Activated B cell treated with CpG ODN at 0.5 μM for 24 hours (primary cell): ENCODE measurements at regions of chr12 and their contacts with region 1.

Region 1: GRCh38 chr12:105107494-105108371 is at the start of gene WASHC4:
- DNase-seq: peak; percentile 95
- ATAC-seq: peak; percentile 89
- H3K4me3 Mint-ChIP-seq: peak within 1 kb of the TSS; percentile 96
- H3K27ac Mint-ChIP-seq: peak within 1 kb of the TSS; percentile 96
- H3K4me1 Mint-ChIP-seq: peaks cover 33% of the 10 kb centered on the region
- H3K27me3 Mint-ChIP-seq: no peaks in the 10 kb centered on the region
- CTCF ChIP-seq: no peak
- total RNA-seq, gene WASHC4: 105 and 128 TPM in 2 replicates

Region 2: GRCh38 chr12:104137913-104138796 is 969.6 kb before region 1 on chr12 and contains the start of gene NFYB:
- CTCF ChIA-PET with region 1: no interaction called
- POLR2A ChIA-PET with region 1: interaction called, 19 read pairs
- intact Hi-C with region 1: loop called (anchors 1 kb)
- DNase-seq: peak; percentile 90
- ATAC-seq: peak; percentile 94
- H3K4me3 Mint-ChIP-seq: peak within 1 kb of the TSS; percentile 89
- H3K27ac Mint-ChIP-seq: peak within 1 kb of the TSS; percentile 85
- H3K4me1 Mint-ChIP-seq: peaks cover 21% of the 10 kb centered on the region
- H3K27me3 Mint-ChIP-seq: no peaks in the 10 kb centered on the region
- CTCF ChIP-seq: no peak
- total RNA-seq, gene NFYB: 17.0 and 17.1 TPM in 2 replicates

Region 3: GRCh38 chr12:104303538-104304151 is 804.1 kb before region 1 on chr12 and contains the start of gene EID3:
- CTCF ChIA-PET with region 1: no interaction called
- POLR2A ChIA-PET with region 1: interaction called, 3 read pairs
- intact Hi-C with region 1: loop called (anchors 5 kb)
- DNase-seq: peak; percentile 88
- ATAC-seq: peak; percentile 99
- H3K4me3 Mint-ChIP-seq: peak within 1 kb of the TSS; percentile 94
- H3K27ac Mint-ChIP-seq: peak within 1 kb of the TSS; percentile 93
- H3K4me1 Mint-ChIP-seq: peaks cover 37% of the 10 kb centered on the region
- H3K27me3 Mint-ChIP-seq: no peaks in the 10 kb centered on the region
- CTCF ChIP-seq: no peak
- total RNA-seq, gene EID3: 6.2 TPM in 2 replicates

Region 4: GRCh38 chr12:104986022-104986941 is 121.5 kb before region 1 on chr12 and contains the start of gene NOPCHAP1:
- CTCF ChIA-PET with region 1: no interaction called
- POLR2A ChIA-PET with region 1: no interaction called
- intact Hi-C with region 1: loop called (anchors 5 kb)
- DNase-seq: peak; percentile 83
- ATAC-seq: peak; percentile 98
- H3K4me3 Mint-ChIP-seq: peak within 1 kb of the TSS; percentile 91
- H3K27ac Mint-ChIP-seq: peak within 1 kb of the TSS; percentile 70
- H3K4me1 Mint-ChIP-seq: peaks cover 24% of the 10 kb centered on the region
- H3K27me3 Mint-ChIP-seq: no peaks in the 10 kb centered on the region
- CTCF ChIP-seq: no peak
- total RNA-seq, gene NOPCHAP1: 26.4 and 30.0 TPM in 2 replicates

Region 5: DNA sequence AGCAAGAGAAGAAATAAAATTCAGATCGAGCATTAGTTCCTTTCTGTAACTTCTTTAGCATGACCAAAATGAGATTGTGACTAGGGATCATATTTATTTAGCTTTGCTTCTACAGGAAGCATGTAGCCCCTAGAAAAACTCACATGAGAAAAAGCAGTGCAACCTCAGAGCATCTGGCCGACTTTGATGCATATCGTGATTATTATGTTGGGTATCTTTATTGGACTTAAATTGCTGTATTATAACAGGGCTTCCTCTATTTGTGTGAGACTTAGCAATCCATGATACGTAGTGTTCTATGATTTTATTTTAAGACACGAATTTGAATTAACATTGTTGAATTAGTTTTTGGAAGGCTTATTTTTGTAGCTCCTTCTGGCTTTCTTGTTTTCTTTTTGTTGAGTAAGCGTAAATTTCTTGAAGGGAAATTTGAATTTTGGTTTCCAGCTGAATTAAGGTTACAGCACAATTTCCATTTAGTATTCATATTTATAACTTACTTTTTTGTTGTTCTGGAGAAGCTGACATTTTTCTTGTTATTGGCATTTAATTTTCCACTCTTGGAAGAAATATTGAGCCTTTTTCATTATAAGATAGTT is 33.7 kb after region 1 on chr12:
- CTCF ChIA-PET with region 1: no interaction called
- POLR2A ChIA-PET with region 1: no interaction called
- intact Hi-C with region 1: loop called (anchors 5 kb)
- DNase-seq: no peak
- ATAC-seq: no peak
- H3K4me3 Mint-ChIP-seq: no peak overlapping the region
- H3K27ac Mint-ChIP-seq: no peak overlapping the region
- H3K4me1 Mint-ChIP-seq: peaks cover 9% of the 10 kb centered on the region
- H3K27me3 Mint-ChIP-seq: no peaks in the 10 kb centered on the region
- CTCF ChIP-seq: no peak

Region 6: GRCh38 chr12:105189293-105189692 is 81.6 kb after region 1 on chr12:
- CTCF ChIA-PET with region 1: no interaction called
- POLR2A ChIA-PET with region 1: no interaction called
- intact Hi-C with region 1: no loop called
- DNase-seq: no peak
- ATAC-seq: no peak
- H3K4me3 Mint-ChIP-seq: no peak overlapping the region
- H3K27ac Mint-ChIP-seq: peak overlapping the region; percentile 11
- H3K4me1 Mint-ChIP-seq: peaks cover 2% of the 10 kb centered on the region
- H3K27me3 Mint-ChIP-seq: no peaks in the 10 kb centered on the region
- CTCF ChIP-seq: no peak

Region 7: GRCh38 chr12:106955377-106956047 is 1847.8 kb after region 1 on chr12 and contains the start of gene TMEM263:
- CTCF ChIA-PET with region 1: no interaction called
- POLR2A ChIA-PET with region 1: no interaction called
- intact Hi-C with region 1: loop called (anchors 5 kb)
- DNase-seq: peak; percentile 91
- ATAC-seq: peak; percentile 86
- H3K4me3 Mint-ChIP-seq: peak within 1 kb of the TSS; percentile 96
- H3K27ac Mint-ChIP-seq: peak within 1 kb of the TSS; percentile 84
- H3K4me1 Mint-ChIP-seq: peaks cover 23% of the 10 kb centered on the region
- H3K27me3 Mint-ChIP-seq: no peaks in the 10 kb centered on the region
- CTCF ChIP-seq: no peak
- total RNA-seq, gene TMEM263: 10.5 and 15.1 TPM in 2 replicates